ENCODE measurements at regions of chr14 and their contacts with region 1.

Region 1: DNA sequence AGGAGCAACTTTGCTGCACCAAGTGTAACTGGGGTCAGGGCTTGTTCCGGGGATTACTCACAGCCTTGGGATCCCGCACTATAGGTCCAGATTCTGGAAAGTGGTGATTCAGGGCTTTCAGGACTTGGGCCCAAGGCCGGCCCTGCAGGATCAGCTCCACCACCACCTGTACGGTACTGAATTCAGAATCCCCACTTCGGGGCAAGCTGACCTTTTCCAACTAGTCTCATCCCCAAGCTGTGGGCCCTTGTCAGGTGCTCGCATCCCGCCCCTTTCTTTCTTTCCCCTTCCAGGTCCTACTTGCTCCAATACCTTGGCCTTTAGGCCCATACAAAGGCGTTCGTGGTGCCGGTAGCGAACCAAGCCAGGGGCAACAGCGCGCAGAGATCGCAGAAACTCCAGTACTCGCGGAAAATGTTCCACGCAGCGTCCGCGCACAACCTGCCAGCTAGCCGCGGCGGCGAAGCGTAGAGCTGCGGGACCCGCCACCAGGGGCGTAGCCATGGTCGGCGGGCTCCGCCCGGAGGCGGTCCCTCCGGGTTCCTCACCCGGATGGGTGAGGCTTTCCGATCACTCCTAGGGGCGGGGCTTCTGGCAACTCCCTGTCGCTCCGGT is 487 bp downstream of the TINF2 start:
- DNase-seq: peak in 7 of 9 donors; percentile 94 to 98 (median 97)
- ATAC-seq: peak; percentile 89
- H3K4me3 ChIP-seq: peak overlapping the region; percentile 78
- H3K4me3 Mint-ChIP-seq: peak overlapping the region; percentile 84 to 99 (median 98)
- H3K27ac ChIP-seq: peak overlapping the region; percentile 98
- H3K27ac Mint-ChIP-seq: peak overlapping the region; percentile 98 to 100 (median 100)
- H3K4me1 ChIP-seq: peaks cover 40 to 41% of the 10 kb centered on the region in 2 donors
- H3K4me1 Mint-ChIP-seq: peaks cover 42 to 71% (median 62%) of the 10 kb centered on the region in 7 donors
- H3K27me3 ChIP-seq: no peaks in the 10 kb centered on the region
- H3K27me3 Mint-ChIP-seq: no peaks in the 10 kb centered on the region

Region 2: DNA sequence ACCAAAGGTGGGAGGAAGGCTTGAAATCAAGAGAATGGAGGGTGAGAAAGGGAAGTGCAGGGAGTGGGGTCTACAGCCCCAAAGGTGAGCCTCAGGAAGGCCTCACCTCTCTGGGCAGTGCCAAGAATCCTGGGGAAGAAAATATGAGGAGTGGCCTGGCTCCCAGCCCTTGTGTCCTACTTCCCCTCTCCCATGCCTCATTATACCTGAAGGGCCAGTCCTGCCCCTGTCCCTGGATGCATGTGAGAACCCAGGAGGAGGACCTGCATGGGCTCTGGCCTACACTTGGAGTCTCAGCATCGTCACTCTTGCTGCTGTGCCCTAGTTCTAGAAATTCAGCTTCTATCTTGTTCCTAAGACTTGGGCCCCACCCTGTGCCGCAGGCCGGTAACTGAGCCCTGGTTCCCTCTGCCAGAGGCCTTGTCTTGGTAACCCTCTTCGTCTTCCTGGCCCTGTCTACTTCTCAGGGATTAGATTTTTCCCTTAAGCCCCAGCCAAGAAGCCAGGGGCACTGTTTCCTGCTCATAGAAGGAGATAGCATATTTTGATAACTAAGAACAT is 795.6 kb before region 1 on chr14:
- CTCF ChIA-PET with region 1: no interaction called
- POLR2A ChIA-PET with region 1: no interaction called
- intact Hi-C with region 1: no loop called
- DNase-seq: no peak
- ATAC-seq: no peak
- H3K4me3 ChIP-seq: no peak overlapping the region
- H3K4me3 Mint-ChIP-seq: no peak overlapping the region
- H3K27ac ChIP-seq: no peak overlapping the region
- H3K27ac Mint-ChIP-seq: peak overlapping the region in 1 of 9 donors; percentile 19
- H3K4me1 ChIP-seq: no peaks in the 10 kb centered on the region
- H3K4me1 Mint-ChIP-seq: peaks cover 0 to 9% (median 0%) of the 10 kb centered on the region in 7 donors
- H3K27me3 ChIP-seq: no peaks in the 10 kb centered on the region
- H3K27me3 Mint-ChIP-seq: peaks cover 6 to 21% (median 15%) of the 10 kb centered on the region in 5 donors

Region 3: DNA sequence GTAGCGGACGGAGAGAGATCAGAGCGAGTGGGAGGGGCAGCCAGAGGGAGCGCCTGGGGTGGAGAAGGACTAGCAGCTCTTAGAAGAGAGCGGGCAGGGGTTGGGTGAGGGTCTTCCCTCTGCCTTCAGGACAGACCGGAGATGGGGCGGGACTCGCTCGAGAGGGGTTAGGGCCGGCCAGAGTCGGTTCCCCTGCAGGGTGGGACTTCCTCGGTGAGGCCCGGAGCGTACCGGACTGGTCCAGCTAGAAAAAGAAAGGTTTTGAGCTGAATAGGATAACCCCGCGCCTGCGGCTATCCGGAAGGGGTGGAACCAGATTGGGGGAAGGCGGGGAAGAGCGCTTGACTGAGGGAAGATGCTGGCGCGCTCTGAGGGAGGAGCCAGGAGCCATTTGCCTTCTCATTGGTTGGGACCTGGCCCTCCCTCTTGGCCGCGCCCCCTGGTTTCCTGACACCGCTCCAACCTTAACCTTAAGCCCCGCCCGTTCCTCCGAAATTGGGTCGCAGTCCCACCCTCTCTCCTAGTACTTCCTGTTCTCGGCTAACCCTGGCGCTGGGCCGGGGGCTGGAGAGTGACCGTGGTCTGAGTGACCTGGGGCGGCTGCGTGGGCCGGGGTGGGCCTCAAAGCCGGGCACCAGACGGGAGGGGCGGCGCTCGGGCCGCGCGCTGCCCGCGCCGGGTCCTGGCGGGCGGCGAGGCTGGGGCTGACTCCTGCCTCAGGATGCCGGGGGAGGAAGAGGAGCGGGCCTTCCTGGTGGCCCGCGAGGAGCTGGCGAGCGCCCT is 94.8 kb before region 1 on chr14 and contains the start of gene RNF31:
- CTCF ChIA-PET with region 1: no interaction called
- POLR2A ChIA-PET with region 1: interaction called, 13 read pairs
- intact Hi-C with region 1: loop called (anchors 1 kb)
- DNase-seq: peak; percentile 88 to 98 (median 96)
- ATAC-seq: peak; percentile 95
- H3K4me3 ChIP-seq: peak within 1 kb of the TSS; percentile 98
- H3K4me3 Mint-ChIP-seq: peak within 1 kb of the TSS; percentile 91 to 100 (median 98)
- H3K27ac ChIP-seq: peak within 1 kb of the TSS; percentile 88
- H3K27ac Mint-ChIP-seq: peak within 1 kb of the TSS; percentile 94 to 98 (median 96)
- H3K4me1 ChIP-seq: peaks cover 35 to 47% of the 10 kb centered on the region in 2 donors
- H3K4me1 Mint-ChIP-seq: peaks cover 39 to 73% (median 61%) of the 10 kb centered on the region in 7 donors
- H3K27me3 ChIP-seq: no peaks in the 10 kb centered on the region
- H3K27me3 Mint-ChIP-seq: no peaks in the 10 kb centered on the region
- total RNA-seq, gene RNF31: 64.0 to 151 (median 95.4) TPM

Region 4: GRCh38 chr14:24215495-24216344 is 26.2 kb before region 1 on chr14 and contains the start of gene MDP1:
- CTCF ChIA-PET with region 1: interaction called, 14 read pairs
- POLR2A ChIA-PET with region 1: interaction called, 117 read pairs
- intact Hi-C with region 1: loop called (anchors 1 kb)
- DNase-seq: peak; percentile 75 to 89 (median 84)
- ATAC-seq: peak; percentile 85
- H3K4me3 ChIP-seq: peak within 1 kb of the TSS; percentile 95
- H3K4me3 Mint-ChIP-seq: peak within 1 kb of the TSS; percentile 89 to 97 (median 95)
- H3K27ac ChIP-seq: peak within 1 kb of the TSS; percentile 91
- H3K27ac Mint-ChIP-seq: peak within 1 kb of the TSS; percentile 80 to 99 (median 96)
- H3K4me1 ChIP-seq: peaks cover 31 to 36% of the 10 kb centered on the region in 2 donors
- H3K4me1 Mint-ChIP-seq: peaks cover 29 to 62% (median 54%) of the 10 kb centered on the region in 7 donors
- H3K27me3 ChIP-seq: no peaks in the 10 kb centered on the region
- H3K27me3 Mint-ChIP-seq: peaks cover 0 to 2% (median 0%) of the 10 kb centered on the region in 5 donors
- total RNA-seq, gene MDP1: 5.5 to 18.5 (median 14.2) TPM

Region 5: DNA sequence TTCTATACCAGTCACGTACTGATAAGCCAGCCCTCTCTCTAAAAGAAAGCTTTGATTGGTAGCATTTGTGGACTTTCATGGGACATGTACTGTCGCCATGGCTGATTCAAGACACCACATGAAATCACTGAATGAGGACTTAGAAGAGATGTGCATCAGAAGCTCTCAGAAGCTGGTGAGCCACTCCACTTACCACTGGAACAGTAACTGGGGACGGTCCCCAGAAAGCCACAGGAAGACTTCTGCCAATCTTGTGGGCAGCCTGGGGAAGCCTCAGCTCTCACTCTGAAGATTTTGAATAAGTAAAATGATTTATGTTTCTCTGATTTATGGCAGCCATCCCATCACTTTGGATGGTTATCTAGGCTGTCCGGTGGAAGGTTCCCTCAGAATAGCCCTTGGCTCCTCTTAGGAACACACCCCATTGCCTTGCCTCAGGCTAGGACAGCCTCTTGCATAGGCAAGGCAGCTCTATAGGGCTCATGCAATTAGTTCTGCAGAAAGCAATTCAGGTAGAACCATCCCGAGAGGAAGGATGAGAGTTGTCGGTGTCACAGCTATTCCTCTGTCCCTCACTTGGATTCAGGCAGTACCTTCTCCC is 47.8 kb after region 1 on chr14:
- CTCF ChIA-PET with region 1: interaction called, 140 read pairs
- POLR2A ChIA-PET with region 1: interaction called, 21 read pairs
- intact Hi-C with region 1: no loop called
- DNase-seq: peak in 1 of 9 donors; percentile 62
- ATAC-seq: peak; percentile 63
- H3K4me3 ChIP-seq: no peak overlapping the region
- H3K4me3 Mint-ChIP-seq: no peak overlapping the region
- H3K27ac ChIP-seq: no peak overlapping the region
- H3K27ac Mint-ChIP-seq: peak overlapping the region in 1 of 9 donors; percentile 28
- H3K4me1 ChIP-seq: no peaks in the 10 kb centered on the region
- H3K4me1 Mint-ChIP-seq: peaks cover 0 to 17% (median 3%) of the 10 kb centered on the region in 7 donors
- H3K27me3 ChIP-seq: no peaks in the 10 kb centered on the region
- H3K27me3 Mint-ChIP-seq: peaks cover 0 to 2% (median 0%) of the 10 kb centered on the region in 5 donors

Region 6: GRCh38 chr14:24339284-24340151 is 97.6 kb after region 1 on chr14 and contains the start of gene RIPK3:
- CTCF ChIA-PET with region 1: interaction called, 6 read pairs
- POLR2A ChIA-PET with region 1: interaction called, 12 read pairs
- intact Hi-C with region 1: no loop called
- DNase-seq: peak; percentile 48 to 72 (median 69)
- ATAC-seq: peak; percentile 90
- H3K4me3 ChIP-seq: peak within 1 kb of the TSS; percentile 96
- H3K4me3 Mint-ChIP-seq: peak within 1 kb of the TSS; percentile 90 to 99 (median 96)
- H3K27ac ChIP-seq: peak within 1 kb of the TSS; percentile 74
- H3K27ac Mint-ChIP-seq: peak within 1 kb of the TSS; percentile 81 to 98 (median 95)
- H3K4me1 ChIP-seq: peaks cover 17 to 18% of the 10 kb centered on the region in 2 donors
- H3K4me1 Mint-ChIP-seq: peaks cover 22 to 35% (median 30%) of the 10 kb centered on the region in 7 donors
- H3K27me3 ChIP-seq: peaks cover 0 to 5% of the 10 kb centered on the region in 2 donors
- H3K27me3 Mint-ChIP-seq: peaks cover 6 to 42% (median 8%) of the 10 kb centered on the region in 5 donors
- total RNA-seq, gene RIPK3: 19.9 to 47.5 (median 36.8) TPM

Measured in naive thymus-derived CD4-positive, alpha-beta T cell (primary cell).